ENCODE measurements at regions of chr2 and their contacts with region 1.

Region 1: DNA sequence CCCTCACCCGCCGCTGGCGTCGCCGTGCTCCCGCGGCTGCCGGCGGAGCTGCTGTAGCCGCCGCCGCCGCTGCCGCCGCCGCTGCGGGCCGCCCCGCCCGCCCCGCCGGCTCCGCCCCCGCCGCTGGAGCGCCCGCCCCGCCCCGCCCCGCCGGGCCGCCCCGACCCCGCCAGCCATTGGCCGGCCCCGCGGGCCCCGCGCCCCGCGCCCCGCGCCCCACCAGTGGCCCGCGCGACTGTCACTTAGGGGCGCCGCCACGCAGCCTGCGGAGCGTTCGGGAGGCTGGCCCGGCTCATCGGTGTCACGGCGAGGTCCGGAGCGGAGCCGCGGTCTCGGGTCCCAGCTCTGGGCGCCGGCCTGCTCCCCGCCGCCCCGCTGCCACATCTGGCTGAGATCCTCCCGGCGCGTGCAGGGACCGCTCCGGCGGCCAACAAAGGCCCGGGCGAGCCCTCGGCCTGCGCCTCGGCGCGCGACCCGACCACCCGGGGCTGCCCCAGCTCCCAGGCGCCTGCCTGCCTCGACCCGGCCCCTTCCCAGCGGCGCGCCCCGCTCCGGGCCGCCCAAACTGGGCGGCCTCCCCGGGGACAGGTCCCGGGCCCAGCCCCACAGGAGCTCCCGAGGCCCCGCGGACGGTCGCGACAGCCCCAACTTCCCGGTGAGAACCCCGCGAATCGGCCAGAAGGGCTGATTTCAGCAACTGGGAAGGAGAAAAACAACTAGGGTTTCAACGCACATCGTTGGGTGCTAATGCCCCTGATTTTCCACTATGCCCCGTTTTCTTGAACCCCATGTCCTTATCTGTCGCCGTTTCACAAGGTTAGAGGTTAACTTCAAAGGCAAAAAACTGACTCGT is at the start of gene MGAT4A:
- DNase-seq: peak; percentile 52
- H3K4me3 ChIP-seq: peak within 1 kb of the TSS; percentile 64 to 97 (median 77)
- H3K27ac ChIP-seq: peak within 1 kb of the TSS; percentile 60
- H3K4me1 ChIP-seq: peaks cover 48% of the 10 kb centered on the region
- H3K27me3 ChIP-seq: no peaks in the 10 kb centered on the region
- CTCF ChIP-seq: no peak
- POLR2A ChIP-seq: peak; percentile 68
- total RNA-seq, gene MGAT4A: 42.2 and 47.6 TPM in 2 replicates

Region 2: DNA sequence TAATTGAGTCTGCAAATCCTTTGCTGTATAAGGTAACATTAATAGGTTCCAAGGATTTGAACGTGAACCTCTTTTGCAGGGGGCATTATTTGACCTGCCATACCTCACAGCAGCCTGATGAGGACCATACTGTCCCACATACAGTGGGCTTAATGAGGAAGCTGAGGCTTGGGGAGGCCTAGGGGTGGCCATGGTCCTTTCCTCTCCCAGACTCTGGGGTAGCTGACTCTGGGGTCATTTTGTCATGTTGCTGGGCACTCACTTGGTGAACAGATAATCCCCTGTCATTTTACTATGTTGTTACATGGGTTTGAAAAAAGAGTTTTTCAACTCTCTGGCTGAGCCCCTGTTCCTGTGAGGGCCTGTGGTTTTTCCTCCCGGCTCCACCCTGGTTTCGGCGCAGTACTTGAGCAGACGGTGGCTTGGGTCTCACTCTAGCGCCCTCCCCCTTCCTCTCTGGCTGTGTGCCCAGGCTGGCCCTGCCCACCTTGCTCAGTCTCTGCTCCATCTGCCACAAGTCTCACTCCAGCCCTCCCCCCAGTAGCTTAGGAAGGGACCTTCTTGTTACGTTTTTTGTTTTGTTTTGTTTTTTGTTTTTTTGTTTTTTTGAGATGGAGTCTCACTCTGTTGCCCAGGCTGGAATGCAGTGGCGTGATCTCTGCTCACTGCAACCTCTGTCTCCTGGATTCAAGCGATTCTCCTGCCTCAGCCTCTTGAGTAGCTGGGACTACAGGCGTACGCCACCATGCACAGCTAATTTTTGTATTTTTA is 265.6 kb before region 1 on chr2:
- CTCF ChIA-PET with region 1: no interaction called
- POLR2A ChIA-PET with region 1: no interaction called
- dilution Hi-C with region 1: no loop called
- intact Hi-C with region 1: no loop called
- DNase-seq: peak; percentile 92
- H3K4me3 ChIP-seq: no peak overlapping the region
- H3K27ac ChIP-seq: peak overlapping the region; percentile 46
- H3K4me1 ChIP-seq: peaks cover 20% of the 10 kb centered on the region
- H3K27me3 ChIP-seq: no peaks in the 10 kb centered on the region
- CTCF ChIP-seq: no peak
- POLR2A ChIP-seq: no peak

Region 3: GRCh38 chr2:98691303-98691702 is 40.0 kb before region 1 on chr2:
- CTCF ChIA-PET with region 1: interaction called, 3 read pairs
- POLR2A ChIA-PET with region 1: no interaction called
- dilution Hi-C with region 1: no loop called
- intact Hi-C with region 1: loop called (anchors 1 kb)
- DNase-seq: peak; percentile 84
- H3K4me3 ChIP-seq: no peak overlapping the region
- H3K27ac ChIP-seq: peak overlapping the region; percentile 55
- H3K4me1 ChIP-seq: peaks cover 14% of the 10 kb centered on the region
- H3K27me3 ChIP-seq: no peaks in the 10 kb centered on the region
- CTCF ChIP-seq: no peak
- POLR2A ChIP-seq: no peak

Region 4: DNA sequence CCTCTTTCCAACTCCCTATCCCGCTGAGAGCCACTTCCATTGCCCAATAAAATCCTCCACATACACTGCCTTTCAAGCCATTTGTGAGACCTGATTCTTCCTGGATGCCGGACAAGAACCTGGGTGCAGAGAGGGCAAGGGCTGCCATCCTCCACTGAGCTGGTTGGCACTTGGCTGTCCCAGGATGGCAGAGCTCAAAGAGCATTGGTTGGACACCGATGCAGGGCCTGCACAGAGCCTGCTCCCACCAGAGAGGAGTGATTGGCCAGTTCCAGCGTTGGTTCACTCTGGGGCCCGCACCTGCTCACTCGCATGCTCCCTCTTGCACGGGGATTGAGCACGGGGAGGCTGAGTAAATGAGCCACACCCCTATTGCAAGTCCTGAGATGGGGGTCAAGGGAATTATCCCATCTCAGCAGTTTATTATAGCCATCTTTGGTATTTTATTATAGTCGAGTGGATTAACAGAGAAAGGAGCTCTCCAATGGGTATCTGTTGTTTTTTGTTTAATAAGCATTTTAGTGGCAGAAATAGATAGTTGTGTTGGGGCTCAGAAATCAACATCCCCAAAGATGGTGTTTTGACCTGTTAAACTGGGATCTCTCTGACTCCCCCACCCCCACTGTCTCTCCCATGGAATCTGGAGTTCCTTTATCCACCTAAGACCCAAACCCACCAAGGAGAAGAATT is 19.5 kb after region 1 on chr2:
- CTCF ChIA-PET with region 1: no interaction called
- POLR2A ChIA-PET with region 1: no interaction called
- dilution Hi-C with region 1: no loop called
- intact Hi-C with region 1: no loop called
- DNase-seq: no peak
- H3K4me3 ChIP-seq: no peak overlapping the region
- H3K27ac ChIP-seq: no peak overlapping the region
- H3K4me1 ChIP-seq: peaks cover 10% of the 10 kb centered on the region
- H3K27me3 ChIP-seq: no peaks in the 10 kb centered on the region
- CTCF ChIP-seq: no peak
- POLR2A ChIP-seq: no peak

Region 5: DNA sequence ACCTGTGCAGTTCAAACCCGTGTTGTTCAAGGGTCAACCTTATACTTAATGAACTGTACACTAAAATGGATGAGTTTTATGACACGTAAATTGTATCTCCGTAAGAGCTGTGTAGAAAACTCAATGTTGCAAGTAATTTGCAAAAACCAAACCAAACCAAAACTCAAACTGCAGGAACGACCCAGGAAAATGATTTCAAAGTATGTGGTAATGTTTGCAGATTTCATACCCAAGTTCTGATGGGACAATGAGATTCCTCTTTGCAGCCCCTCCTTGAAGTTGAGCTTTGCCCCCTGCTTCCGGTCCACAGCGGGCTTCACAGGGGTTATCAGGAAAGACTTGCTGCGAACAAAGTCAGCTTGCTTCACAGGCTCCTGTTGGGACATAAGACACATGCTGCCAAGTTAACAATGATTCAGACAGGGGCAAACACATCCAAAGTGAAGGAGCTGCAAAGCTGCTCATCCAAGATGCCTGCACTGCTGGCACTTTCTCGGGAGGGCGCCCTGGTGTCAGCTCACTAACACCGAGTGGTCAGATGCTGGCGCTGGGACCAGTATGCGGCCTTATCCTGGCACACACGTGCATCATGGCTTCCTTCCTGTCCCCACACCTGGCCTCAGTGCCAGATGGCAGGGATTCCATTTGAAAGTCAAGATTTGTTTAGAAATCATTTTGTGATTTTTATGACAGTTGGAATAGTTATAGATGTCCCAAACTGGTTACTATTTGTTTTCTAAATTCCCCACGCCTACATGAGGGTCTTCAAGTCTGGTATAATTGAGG is 64.8 kb after region 1 on chr2:
- CTCF ChIA-PET with region 1: interaction called, 8 read pairs
- POLR2A ChIA-PET with region 1: no interaction called
- dilution Hi-C with region 1: no loop called
- intact Hi-C with region 1: loop called (anchors 1 kb)
- DNase-seq: peak; percentile 49
- H3K4me3 ChIP-seq: no peak overlapping the region
- H3K27ac ChIP-seq: no peak overlapping the region
- H3K4me1 ChIP-seq: peaks cover 43% of the 10 kb centered on the region
- H3K27me3 ChIP-seq: no peaks in the 10 kb centered on the region
- CTCF ChIP-seq: peak in 1 of 2 donors; percentile 6
- POLR2A ChIP-seq: no peak

Region 6: GRCh38 chr2:98899041-98899702 is 167.9 kb after region 1 on chr2:
- CTCF ChIA-PET with region 1: no interaction called
- POLR2A ChIA-PET with region 1: no interaction called
- dilution Hi-C with region 1: no loop called
- intact Hi-C with region 1: no loop called
- DNase-seq: no peak
- H3K4me3 ChIP-seq: no peak overlapping the region
- H3K27ac ChIP-seq: no peak overlapping the region
- H3K4me1 ChIP-seq: no peaks in the 10 kb centered on the region
- H3K27me3 ChIP-seq: peaks cover 0 to 6% of the 10 kb centered on the region in 2 experiments
- CTCF ChIP-seq: no peak
- POLR2A ChIP-seq: no peak

Region 7: DNA sequence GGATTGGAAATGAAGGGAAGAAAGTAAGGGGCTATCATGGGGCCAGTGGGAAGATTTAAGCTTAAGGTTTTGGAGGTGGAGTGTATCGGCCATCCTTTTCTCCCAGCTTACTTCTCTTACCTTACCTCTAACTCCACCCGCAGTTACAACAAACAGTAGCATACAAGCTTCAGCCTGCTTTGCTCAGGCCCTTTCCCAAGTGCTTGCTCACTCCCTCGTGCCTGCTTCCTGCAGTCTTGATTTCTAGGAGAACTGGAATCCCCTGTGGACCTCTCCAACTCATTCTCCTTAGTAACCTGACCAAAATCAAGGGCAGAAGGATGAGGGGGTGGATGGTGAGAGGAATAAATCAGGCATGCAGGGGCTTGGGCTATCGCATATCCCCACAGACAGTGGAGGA is 530.0 kb after region 1 on chr2:
- CTCF ChIA-PET with region 1: no interaction called
- POLR2A ChIA-PET with region 1: no interaction called
- dilution Hi-C with region 1: no loop called
- intact Hi-C with region 1: no loop called
- DNase-seq: no peak
- H3K4me3 ChIP-seq: no peak overlapping the region
- H3K27ac ChIP-seq: no peak overlapping the region
- H3K4me1 ChIP-seq: no peaks in the 10 kb centered on the region
- H3K27me3 ChIP-seq: no peaks in the 10 kb centered on the region
- CTCF ChIP-seq: no peak
- POLR2A ChIP-seq: no peak

Measured in endothelial cell of umbilical vein (primary cell).